OCI-LY7 (cell line): ENCODE measurements at regions of chr1 and their contacts with region 1.

Region 1: DNA sequence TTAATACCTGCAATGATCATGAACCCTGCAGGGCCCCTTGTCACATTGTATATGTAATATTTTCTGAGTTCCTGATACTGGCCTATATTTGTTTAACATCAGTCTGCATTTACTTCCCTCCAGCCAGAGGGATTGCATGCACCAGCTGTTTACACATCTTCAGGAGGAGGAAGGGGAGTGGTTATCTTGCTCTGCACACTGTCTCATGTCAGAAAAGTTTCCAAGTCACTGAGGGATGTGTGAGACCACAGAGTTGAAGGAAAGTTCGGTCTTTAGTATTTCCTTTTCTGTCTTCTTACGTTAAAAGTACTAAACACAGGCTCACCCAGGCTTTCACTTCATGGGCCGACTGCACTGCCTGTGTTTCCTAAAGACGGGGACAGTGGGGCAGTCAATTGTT is 574.1 kb downstream of the LMO4 start:
- DNase-seq: no peak
- H3K4me3 ChIP-seq: no peak overlapping the region
- H3K27ac ChIP-seq: no peak overlapping the region
- H3K4me1 ChIP-seq: no peaks in the 10 kb centered on the region
- CTCF ChIP-seq: no peak

Region 2: GRCh38 chr1:87305762-87306161 is 597.1 kb before region 1 on chr1:
- CTCF ChIA-PET with region 1: no interaction called
- POLR2A ChIA-PET with region 1: no interaction called
- intact Hi-C with region 1: no loop called
- DNase-seq: no peak
- H3K4me3 ChIP-seq: no peak overlapping the region
- H3K27ac ChIP-seq: no peak overlapping the region
- H3K4me1 ChIP-seq: no peaks in the 10 kb centered on the region
- CTCF ChIP-seq: no peak

Region 3: DNA sequence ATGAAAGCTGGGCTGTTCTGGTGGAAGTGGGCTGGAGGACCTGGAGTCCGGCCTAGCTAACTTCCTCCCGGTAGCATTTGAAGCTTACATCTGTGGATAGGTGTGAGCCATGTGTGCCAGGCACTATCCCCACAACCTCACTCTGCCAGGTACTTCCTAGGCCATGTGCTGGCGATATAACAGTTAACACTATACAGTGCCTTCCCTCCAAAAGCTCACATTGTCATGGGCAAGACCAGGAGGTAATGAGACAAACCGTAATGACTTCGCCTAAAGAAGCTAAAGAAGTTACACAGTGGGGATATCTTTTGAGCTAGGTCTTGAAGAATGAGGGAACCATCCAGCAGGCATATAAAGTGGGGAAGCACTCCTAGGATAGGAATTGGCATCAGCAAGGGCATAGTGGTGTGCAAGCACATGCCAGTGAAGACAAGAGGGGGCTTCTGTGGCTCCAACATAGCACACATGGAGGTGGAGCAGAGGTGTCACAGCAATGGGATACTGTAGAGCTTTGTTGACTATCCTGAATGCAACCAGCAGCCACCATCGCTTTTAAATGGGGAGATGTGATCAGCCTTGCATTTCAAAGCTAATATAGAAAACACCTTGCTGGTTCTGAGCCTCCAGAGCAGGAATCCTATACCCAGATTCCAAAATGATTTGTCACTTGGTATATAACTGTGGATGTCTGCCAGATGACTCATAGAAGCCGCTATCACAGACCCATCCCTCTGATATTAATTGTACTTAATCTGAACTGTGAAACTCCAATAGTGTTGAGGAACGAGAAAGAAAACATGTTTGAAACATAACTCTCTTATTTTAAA is 107.8 kb before region 1 on chr1:
- CTCF ChIA-PET with region 1: interaction called, 17 read pairs
- POLR2A ChIA-PET with region 1: no interaction called
- intact Hi-C with region 1: no loop called
- DNase-seq: no peak
- H3K4me3 ChIP-seq: no peak overlapping the region
- H3K27ac ChIP-seq: no peak overlapping the region
- H3K4me1 ChIP-seq: no peaks in the 10 kb centered on the region
- CTCF ChIP-seq: no peak

Region 4: DNA sequence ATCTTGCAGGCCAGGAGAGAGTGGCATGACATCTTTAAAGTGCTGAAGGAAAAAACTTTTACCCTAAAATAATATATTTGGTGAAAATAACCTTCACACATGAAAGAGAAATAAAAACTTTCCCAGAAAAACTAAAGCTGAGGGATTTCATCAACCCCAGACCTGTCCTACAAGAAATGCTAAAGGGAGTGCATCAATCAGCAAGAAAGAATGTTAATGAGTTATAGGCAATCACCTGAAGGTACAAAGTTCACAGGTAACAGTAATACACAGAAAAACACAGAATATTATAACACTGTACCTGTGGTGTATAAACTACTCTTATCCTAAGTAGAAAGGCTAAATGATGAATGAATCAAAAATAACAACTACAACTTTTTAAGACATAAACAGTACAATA is 532.0 kb after region 1 on chr1:
- CTCF ChIA-PET with region 1: no interaction called
- POLR2A ChIA-PET with region 1: no interaction called
- intact Hi-C with region 1: no loop called
- DNase-seq: no peak
- H3K4me3 ChIP-seq: no peak overlapping the region
- H3K27ac ChIP-seq: no peak overlapping the region
- H3K4me1 ChIP-seq: no peaks in the 10 kb centered on the region
- CTCF ChIP-seq: no peak